IMR-90 (cell line): ENCODE measurements at regions of chr11 and their contacts with region 1.

Region 1: GRCh38 chr11:3841426-3842350 is 929 bp upstream of the RHOG start:
- DNase-seq: peak; percentile 82
- ATAC-seq: peak; percentile 76
- H3K4me3 ChIP-seq: peak overlapping the region; percentile 94
- H3K27ac ChIP-seq: peak overlapping the region; percentile 95
- H3K4me1 ChIP-seq: peaks cover 16% of the 10 kb centered on the region
- H3K27me3 ChIP-seq: no peaks in the 10 kb centered on the region
- CTCF ChIP-seq: peak; percentile 79
- POLR2A ChIP-seq: peak; percentile 57; the same call in 1 of the 2 replicates
- RAD21 ChIP-seq: peak; percentile 50

Region 2: DNA sequence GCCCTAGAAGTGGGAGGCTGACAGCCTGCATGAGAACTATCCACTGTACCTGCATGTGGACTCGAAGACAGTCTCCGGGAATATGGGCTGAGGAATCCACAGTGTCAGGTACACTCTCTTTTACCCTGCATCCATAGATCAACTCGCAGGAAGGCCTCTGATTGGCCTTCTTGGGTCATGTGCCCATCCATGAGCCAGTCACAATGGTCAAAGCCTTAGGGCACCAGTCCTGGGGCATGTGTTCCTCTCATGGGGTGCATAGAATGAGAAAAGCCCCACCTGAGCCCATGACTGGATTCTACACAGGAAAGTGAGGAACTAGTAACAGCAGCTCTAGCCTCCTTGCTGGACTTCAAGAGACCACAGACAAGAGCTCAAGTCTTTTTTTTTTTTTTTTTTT is 186.1 kb before region 1 on chr11:
- CTCF ChIA-PET with region 1: no interaction called
- POLR2A ChIA-PET with region 1: interaction called, 10 read pairs
- dilution Hi-C with region 1: no loop called
- in situ Hi-C with region 1: no loop called
- intact Hi-C with region 1: no loop called
- DNase-seq: no peak
- ATAC-seq: no peak
- H3K4me3 ChIP-seq: no peak overlapping the region
- H3K27ac ChIP-seq: no peak overlapping the region
- H3K4me1 ChIP-seq: no peaks in the 10 kb centered on the region
- H3K27me3 ChIP-seq: peaks cover 16% of the 10 kb centered on the region
- CTCF ChIP-seq: no peak
- POLR2A ChIP-seq: no peak
- RAD21 ChIP-seq: no peak

Region 3: GRCh38 chr11:3797329-3798095 is 44.2 kb before region 1 on chr11 and contains the start of gene NUP98:
- CTCF ChIA-PET with region 1: no interaction called
- POLR2A ChIA-PET with region 1: no interaction called
- dilution Hi-C with region 1: no loop called
- in situ Hi-C with region 1: no loop called
- intact Hi-C with region 1: loop called (anchors 5 kb)
- DNase-seq: peak; percentile 100
- ATAC-seq: peak; percentile 96
- H3K4me3 ChIP-seq: peak within 1 kb of the TSS; percentile 74
- H3K27ac ChIP-seq: peak within 1 kb of the TSS; percentile 79
- H3K4me1 ChIP-seq: no peaks in the 10 kb centered on the region; the same call in 1 of the 2 replicates
- H3K27me3 ChIP-seq: no peaks in the 10 kb centered on the region
- CTCF ChIP-seq: no peak
- POLR2A ChIP-seq: peak; percentile 97
- RAD21 ChIP-seq: no peak
- total RNA-seq, gene NUP98: 138 and 145 TPM in 2 replicates